ENCODE measurements at regions of chr11 and their contacts with region 1.

Region 1: DNA sequence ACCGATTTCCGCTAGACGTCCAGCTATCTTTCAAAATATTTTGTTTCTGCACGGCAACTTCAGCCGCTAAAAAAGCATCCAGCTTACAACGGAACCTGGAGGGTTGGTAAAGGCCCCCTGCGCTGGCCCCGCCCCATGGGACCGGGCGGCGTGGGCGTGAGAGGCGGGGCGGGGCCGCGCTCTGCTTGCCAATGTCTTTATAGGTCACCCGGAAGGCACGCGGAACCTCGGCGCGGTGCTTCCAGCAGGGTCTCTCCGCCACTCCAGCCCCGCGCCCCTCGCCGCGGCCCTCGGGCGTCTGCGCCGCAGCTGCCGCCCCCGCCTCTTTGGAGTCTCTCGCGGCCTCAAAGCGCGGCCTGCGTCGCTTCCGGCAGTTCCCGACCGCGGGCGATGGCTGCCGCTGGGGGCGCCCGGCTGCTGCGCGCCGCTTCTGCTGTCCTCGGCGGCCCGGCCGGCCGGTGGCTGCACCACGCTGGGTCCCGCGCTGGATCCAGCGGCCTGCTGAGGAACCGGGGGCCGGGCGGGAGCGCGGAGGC is at the start of gene FDX1:
- DNase-seq: peak; percentile 79 to 84 (median 83)
- H3K4me3 ChIP-seq: peak within 1 kb of the TSS; percentile 57 to 86
- H3K4me3 Mint-ChIP-seq: peak within 1 kb of the TSS; percentile 95 to 99 (median 98)
- H3K27ac ChIP-seq: peak within 1 kb of the TSS; percentile 72
- H3K27ac Mint-ChIP-seq: peak within 1 kb of the TSS; percentile 92 to 99 (median 97)
- H3K4me1 ChIP-seq: peaks cover 42% of the 10 kb centered on the region
- H3K4me1 Mint-ChIP-seq: peaks cover 31 to 51% (median 39%) of the 10 kb centered on the region in 4 donors
- H3K27me3 ChIP-seq: no peaks in the 10 kb centered on the region
- H3K27me3 Mint-ChIP-seq: no peaks in the 10 kb centered on the region
- total RNA-seq, gene FDX1: 10.7 to 12.4 TPM

Region 2: DNA sequence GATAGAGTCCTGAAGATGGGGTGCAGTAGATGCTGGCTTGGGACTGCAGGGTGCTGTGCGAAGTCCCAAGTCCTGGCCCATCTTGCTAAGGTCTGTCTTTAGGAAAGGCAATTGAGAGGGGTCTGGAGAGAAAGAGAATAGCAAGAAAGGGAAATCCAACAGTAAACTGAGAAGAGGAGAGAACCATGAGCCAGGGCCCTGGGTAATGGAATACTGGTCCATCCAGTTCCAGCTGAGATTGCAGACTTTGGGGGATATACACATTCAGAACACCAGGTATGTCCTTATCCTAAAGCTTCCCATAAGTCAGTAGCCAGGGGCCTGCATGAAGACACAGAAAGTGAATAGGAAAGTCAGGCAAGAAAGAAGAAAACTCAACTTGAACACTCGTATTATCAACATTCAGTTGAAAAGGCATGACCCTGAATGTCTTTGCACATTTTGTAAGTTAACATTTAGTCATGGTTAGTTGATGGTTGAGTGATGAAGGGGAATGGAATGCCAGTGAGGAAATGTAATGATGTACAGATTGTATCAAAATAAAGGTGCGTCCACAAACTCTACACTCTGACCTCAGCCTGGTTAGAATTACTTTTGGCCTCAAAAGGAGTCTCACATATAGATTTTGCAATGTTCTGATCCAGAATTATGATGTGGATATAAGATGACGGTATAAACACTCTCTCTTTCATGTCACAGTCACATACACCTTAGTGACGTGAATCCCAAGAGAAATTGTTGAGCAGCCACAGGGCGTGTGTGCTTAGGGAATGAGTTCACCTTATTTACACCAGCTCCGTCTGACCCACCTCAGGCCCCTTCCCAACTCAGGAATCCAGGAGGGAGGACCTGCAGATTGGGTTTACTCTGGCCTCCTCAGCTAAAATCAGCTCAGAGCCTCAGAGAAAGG is 233.7 kb before region 1 on chr11:
- CTCF ChIA-PET with region 1: interaction called, 166 read pairs
- POLR2A ChIA-PET with region 1: interaction called, 6 read pairs
- intact Hi-C with region 1: loop called (anchors 1 kb)
- DNase-seq: no peak
- H3K4me3 ChIP-seq: no peak overlapping the region
- H3K4me3 Mint-ChIP-seq: no peak overlapping the region
- H3K27ac ChIP-seq: no peak overlapping the region
- H3K27ac Mint-ChIP-seq: no peak overlapping the region
- H3K4me1 ChIP-seq: peaks cover 12% of the 10 kb centered on the region
- H3K4me1 Mint-ChIP-seq: peaks cover 10 to 19% (median 12%) of the 10 kb centered on the region in 4 donors
- H3K27me3 ChIP-seq: no peaks in the 10 kb centered on the region
- H3K27me3 Mint-ChIP-seq: no peaks in the 10 kb centered on the region

Region 3: DNA sequence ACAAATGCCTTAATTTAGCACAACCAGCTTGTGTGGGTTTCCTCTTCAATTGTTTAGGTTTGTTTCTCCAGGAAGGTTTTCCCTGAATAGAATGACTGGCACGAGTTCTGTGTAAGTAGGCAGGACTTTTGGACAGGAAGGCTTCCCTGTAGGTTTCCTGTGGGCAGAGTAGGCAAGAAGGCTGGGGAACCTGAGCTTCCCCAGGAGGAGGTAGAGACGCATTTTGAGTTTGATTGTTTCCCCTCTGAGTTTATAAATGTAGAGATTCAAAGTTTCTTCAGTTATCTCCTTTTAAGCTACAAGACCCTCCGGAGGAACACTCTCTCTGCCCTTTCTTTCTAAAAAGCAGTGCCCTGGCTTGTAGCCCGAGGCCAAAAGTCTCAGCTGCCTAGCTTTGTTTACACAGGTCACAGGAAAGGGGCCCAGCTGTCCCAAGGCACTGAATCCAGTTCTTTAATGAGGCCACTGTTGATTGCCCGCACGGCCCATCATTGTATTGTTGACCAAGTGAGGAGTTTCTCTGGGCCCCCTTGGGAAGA is 66.8 kb before region 1 on chr11:
- CTCF ChIA-PET with region 1: interaction called, 10 read pairs
- POLR2A ChIA-PET with region 1: no interaction called
- intact Hi-C with region 1: no loop called
- DNase-seq: no peak
- H3K4me3 ChIP-seq: no peak overlapping the region
- H3K4me3 Mint-ChIP-seq: peak overlapping the region in 1 of 8 donors; percentile 56
- H3K27ac ChIP-seq: no peak overlapping the region
- H3K27ac Mint-ChIP-seq: peak overlapping the region in 1 of 7 donors; percentile 13
- H3K4me1 ChIP-seq: no peaks in the 10 kb centered on the region
- H3K4me1 Mint-ChIP-seq: no peaks in the 10 kb centered on the region
- H3K27me3 ChIP-seq: no peaks in the 10 kb centered on the region
- H3K27me3 Mint-ChIP-seq: no peaks in the 10 kb centered on the region

Region 4: GRCh38 chr11:110392056-110392455 is 37.7 kb before region 1 on chr11:
- CTCF ChIA-PET with region 1: interaction called, 4 read pairs
- POLR2A ChIA-PET with region 1: interaction called, 11 read pairs
- intact Hi-C with region 1: no loop called
- DNase-seq: no peak
- H3K4me3 ChIP-seq: no peak overlapping the region
- H3K4me3 Mint-ChIP-seq: no peak overlapping the region
- H3K27ac ChIP-seq: no peak overlapping the region
- H3K27ac Mint-ChIP-seq: no peak overlapping the region
- H3K4me1 ChIP-seq: peaks cover 6% of the 10 kb centered on the region
- H3K4me1 Mint-ChIP-seq: peaks cover 7 to 27% (median 12%) of the 10 kb centered on the region in 4 donors
- H3K27me3 ChIP-seq: no peaks in the 10 kb centered on the region
- H3K27me3 Mint-ChIP-seq: peaks cover 3 to 8% of the 10 kb centered on the region in 2 donors

Region 5: DNA sequence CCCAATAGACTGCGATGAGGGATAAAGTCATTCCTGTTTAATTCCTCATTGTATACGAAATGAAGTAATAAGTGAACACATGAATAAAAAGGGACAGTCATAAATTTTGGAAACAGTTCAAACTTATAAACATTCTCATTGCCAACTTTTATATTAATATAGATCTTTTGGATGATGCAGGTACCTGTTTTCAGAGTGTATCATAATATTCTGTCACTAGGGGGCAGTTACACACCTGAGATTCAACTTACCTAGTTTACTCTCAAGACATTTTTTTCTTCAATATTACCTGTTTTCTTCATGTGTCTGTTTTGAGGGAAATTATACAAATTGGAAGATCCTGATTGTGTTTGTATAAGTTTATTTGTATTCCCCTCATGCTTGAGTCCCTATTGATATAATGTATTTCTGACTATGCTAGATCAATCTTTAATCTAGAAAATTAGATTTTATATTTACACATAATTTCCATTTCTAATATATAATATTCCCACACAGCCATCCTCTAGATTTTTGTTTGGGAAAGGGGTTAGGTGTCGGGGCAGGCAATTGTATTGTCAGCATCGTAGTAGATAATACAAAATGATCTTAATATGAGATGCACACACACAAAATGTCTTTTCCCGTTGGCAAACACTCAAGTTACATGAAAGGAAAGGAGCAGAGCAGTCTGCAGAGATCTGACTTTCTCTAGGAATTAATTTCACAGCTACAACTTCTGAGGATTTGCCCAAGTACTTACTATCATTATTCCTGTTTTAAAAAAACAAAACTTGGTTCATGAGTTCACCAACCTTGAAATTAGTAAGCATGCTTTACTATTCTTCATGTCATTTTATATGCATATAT is 18.3 kb after region 1 on chr11:
- CTCF ChIA-PET with region 1: interaction called, 104 read pairs
- POLR2A ChIA-PET with region 1: interaction called, 3 read pairs
- intact Hi-C with region 1: no loop called
- DNase-seq: peak in 3 of 5 donors; percentile 19 to 24 (median 23)
- H3K4me3 ChIP-seq: no peak overlapping the region
- H3K4me3 Mint-ChIP-seq: no peak overlapping the region
- H3K27ac ChIP-seq: no peak overlapping the region
- H3K27ac Mint-ChIP-seq: no peak overlapping the region
- H3K4me1 ChIP-seq: peaks cover 2% of the 10 kb centered on the region
- H3K4me1 Mint-ChIP-seq: peaks cover 21 to 42% (median 26%) of the 10 kb centered on the region in 4 donors
- H3K27me3 ChIP-seq: no peaks in the 10 kb centered on the region
- H3K27me3 Mint-ChIP-seq: no peaks in the 10 kb centered on the region

Region 6: DNA sequence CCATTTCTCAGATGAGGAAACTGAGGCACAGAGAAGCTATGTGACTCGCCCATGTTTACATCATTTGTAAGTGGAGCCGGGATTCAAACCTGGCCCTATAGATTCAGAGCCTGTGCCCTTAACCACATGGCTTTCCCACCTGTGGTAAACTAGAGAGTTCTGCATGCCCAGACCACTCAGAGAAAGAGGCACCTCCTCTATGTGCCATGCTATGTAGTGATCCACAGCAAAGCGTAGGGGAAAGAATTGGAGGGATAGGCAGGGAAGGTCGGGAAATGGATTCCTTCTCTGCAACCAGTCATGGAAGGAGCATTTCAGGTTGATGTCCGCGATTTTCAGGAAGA is 800.3 kb after region 1 on chr11:
- CTCF ChIA-PET with region 1: interaction called, 45 read pairs
- POLR2A ChIA-PET with region 1: no interaction called
- intact Hi-C with region 1: no loop called
- DNase-seq: no peak
- H3K4me3 ChIP-seq: no peak overlapping the region
- H3K4me3 Mint-ChIP-seq: peak overlapping the region; percentile 64 to 87 (median 78)
- H3K27ac ChIP-seq: no peak overlapping the region
- H3K27ac Mint-ChIP-seq: peak overlapping the region in 1 of 7 donors; percentile 19
- H3K4me1 ChIP-seq: peaks cover 12% of the 10 kb centered on the region
- H3K4me1 Mint-ChIP-seq: peaks cover 12 to 22% (median 15%) of the 10 kb centered on the region in 4 donors
- H3K27me3 ChIP-seq: no peaks in the 10 kb centered on the region
- H3K27me3 Mint-ChIP-seq: peaks cover 9 to 18% of the 10 kb centered on the region in 2 donors